ENCODE measurements at regions of chr9 and their contacts with region 1.

Region 1: GRCh38 chr9:73549991-73550390 is 398.3 kb downstream of the ANXA1 start:
- DNase-seq: no peak
- ATAC-seq: no peak
- H3K4me3 ChIP-seq: no peak overlapping the region
- H3K27ac ChIP-seq: no peak overlapping the region
- H3K4me1 ChIP-seq: no peaks in the 10 kb centered on the region
- H3K27me3 ChIP-seq: no peaks in the 10 kb centered on the region
- CTCF ChIP-seq: no peak
- EP300 ChIP-seq: no peak
- POLR2A ChIP-seq: no peak
- RAD21 ChIP-seq: no peak

Region 2: GRCh38 chr9:73118898-73119554 is 431.0 kb before region 1 on chr9:
- CTCF ChIA-PET with region 1: no interaction called
- POLR2A ChIA-PET with region 1: no interaction called
- RAD21 ChIA-PET with region 1: no interaction called
- SMC1A ChIA-PET with region 1: no interaction called
- in situ Hi-C with region 1: no loop called
- intact Hi-C with region 1: no loop called
- DNase-seq: no peak
- ATAC-seq: no peak
- H3K4me3 ChIP-seq: no peak overlapping the region
- H3K27ac ChIP-seq: no peak overlapping the region
- H3K4me1 ChIP-seq: no peaks in the 10 kb centered on the region
- H3K27me3 ChIP-seq: no peaks in the 10 kb centered on the region
- CTCF ChIP-seq: no peak
- EP300 ChIP-seq: no peak
- POLR2A ChIP-seq: no peak
- RAD21 ChIP-seq: no peak

Region 3: GRCh38 chr9:73613092-73613701 is 63.2 kb after region 1 on chr9:
- CTCF ChIA-PET with region 1: no interaction called
- POLR2A ChIA-PET with region 1: no interaction called
- RAD21 ChIA-PET with region 1: no interaction called
- SMC1A ChIA-PET with region 1: no interaction called
- in situ Hi-C with region 1: loop called (anchors 10 kb)
- intact Hi-C with region 1: no loop called
- DNase-seq: no peak
- ATAC-seq: no peak
- H3K4me3 ChIP-seq: no peak overlapping the region
- H3K27ac ChIP-seq: no peak overlapping the region
- H3K4me1 ChIP-seq: no peaks in the 10 kb centered on the region
- H3K27me3 ChIP-seq: no peaks in the 10 kb centered on the region
- CTCF ChIP-seq: no peak
- EP300 ChIP-seq: no peak
- POLR2A ChIP-seq: no peak
- RAD21 ChIP-seq: no peak

Region 4: DNA sequence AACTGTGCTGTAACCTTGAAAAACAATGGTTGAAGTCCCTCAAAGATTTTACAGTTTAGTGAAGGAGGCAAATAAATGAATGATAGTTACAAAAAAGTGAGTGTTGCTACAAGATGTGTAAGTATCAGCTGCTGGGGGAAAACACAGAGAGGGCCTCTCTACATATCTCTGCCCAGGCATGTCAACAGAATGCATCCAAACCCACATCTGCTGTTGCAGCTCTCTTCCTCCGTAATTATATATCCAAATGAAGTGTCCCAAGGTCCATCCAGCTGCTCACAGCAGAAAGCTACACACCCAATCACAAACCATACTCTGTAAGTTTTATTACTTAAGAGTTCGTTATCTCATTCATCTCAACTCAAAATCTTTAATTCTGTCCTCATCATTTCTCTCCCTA is 186.3 kb after region 1 on chr9:
- CTCF ChIA-PET with region 1: no interaction called
- POLR2A ChIA-PET with region 1: no interaction called
- RAD21 ChIA-PET with region 1: no interaction called
- SMC1A ChIA-PET with region 1: no interaction called
- in situ Hi-C with region 1: no loop called
- intact Hi-C with region 1: no loop called
- DNase-seq: no peak
- ATAC-seq: no peak
- H3K4me3 ChIP-seq: no peak overlapping the region
- H3K27ac ChIP-seq: no peak overlapping the region
- H3K4me1 ChIP-seq: no peaks in the 10 kb centered on the region
- H3K27me3 ChIP-seq: no peaks in the 10 kb centered on the region
- CTCF ChIP-seq: no peak
- EP300 ChIP-seq: no peak
- POLR2A ChIP-seq: no peak
- RAD21 ChIP-seq: no peak

Region 5: DNA sequence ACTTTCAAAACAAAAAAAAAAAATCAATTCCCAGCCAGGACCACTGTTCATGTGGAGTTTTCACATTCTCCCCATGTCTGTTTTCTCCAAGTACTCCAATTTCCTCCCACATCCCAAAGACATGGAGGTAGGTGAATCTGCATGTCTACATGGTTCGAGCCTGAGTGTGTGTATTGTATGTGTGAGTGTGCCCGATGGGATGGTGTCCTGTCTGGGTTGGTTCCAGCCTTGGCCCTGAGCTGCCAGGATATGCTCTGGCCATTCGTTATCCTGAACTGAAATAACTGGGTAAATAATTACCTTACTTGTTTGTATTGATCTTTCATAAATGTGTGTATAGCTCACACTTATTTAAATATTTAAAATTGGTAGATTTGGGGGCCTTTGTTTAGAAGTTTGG is 494.9 kb after region 1 on chr9:
- CTCF ChIA-PET with region 1: no interaction called
- POLR2A ChIA-PET with region 1: no interaction called
- RAD21 ChIA-PET with region 1: no interaction called
- SMC1A ChIA-PET with region 1: no interaction called
- in situ Hi-C with region 1: no loop called
- intact Hi-C with region 1: no loop called
- DNase-seq: no peak
- ATAC-seq: no peak
- H3K4me3 ChIP-seq: no peak overlapping the region
- H3K27ac ChIP-seq: no peak overlapping the region
- H3K4me1 ChIP-seq: no peaks in the 10 kb centered on the region
- H3K27me3 ChIP-seq: no peaks in the 10 kb centered on the region
- CTCF ChIP-seq: no peak
- EP300 ChIP-seq: no peak
- POLR2A ChIP-seq: no peak
- RAD21 ChIP-seq: no peak

Measured in GM12878 (cell line).